Naive thymus-derived CD4-positive, alpha-beta T cell (primary cell): ENCODE measurements at regions of chr14 and their contacts with region 1.

Region 1: DNA sequence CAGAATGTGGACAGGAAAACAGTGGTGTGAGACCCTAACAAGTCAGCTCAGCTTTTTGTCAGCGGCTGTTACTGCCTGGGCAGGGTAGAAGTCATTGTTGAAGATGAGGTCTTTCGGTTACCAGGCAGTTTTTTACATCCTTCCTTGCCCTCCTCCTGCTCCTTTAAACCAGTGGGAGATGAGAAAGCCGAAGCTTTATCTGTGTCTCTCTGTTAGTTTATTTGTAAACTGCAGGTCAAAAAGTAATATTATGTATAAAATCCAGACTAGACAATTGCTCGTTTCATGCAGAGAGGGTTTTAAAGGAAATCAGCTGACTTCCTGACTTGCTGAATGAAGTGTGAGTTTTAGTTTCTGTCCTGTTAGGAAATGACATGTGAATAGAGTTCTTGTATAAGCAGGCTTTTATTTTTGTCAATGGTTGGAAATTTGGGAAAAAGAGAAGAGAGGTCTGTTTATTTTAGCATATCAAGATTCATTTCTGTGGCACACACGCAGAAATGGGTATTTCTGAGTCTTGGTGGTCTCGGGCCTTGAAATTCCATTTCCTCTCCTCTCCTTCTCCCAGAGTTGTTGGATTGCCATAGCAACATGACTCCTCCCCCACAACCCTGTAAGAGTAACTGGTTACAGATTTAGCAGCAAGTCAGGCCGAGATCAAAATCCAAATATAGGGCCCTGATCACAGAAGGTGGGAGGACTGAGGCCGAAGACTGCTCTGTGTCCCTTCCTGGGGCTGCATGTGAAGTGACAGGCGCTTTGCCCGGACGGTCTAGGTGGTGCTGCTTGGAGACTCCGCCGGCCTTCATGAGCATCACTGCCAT is 60.8 kb downstream of the SAMD4A start:
- DNase-seq: peak in 7 of 9 donors; percentile 30 to 59 (median 44)
- ATAC-seq: peak; percentile 81
- H3K4me3 ChIP-seq: peak overlapping the region; percentile 14
- H3K4me3 Mint-ChIP-seq: peak overlapping the region; percentile 70 to 87 (median 82)
- H3K27ac ChIP-seq: peak overlapping the region; percentile 67
- H3K27ac Mint-ChIP-seq: peak overlapping the region; percentile 86 to 93 (median 92)
- H3K4me1 ChIP-seq: peaks cover 32 to 39% of the 10 kb centered on the region in 2 donors
- H3K4me1 Mint-ChIP-seq: peaks cover 34 to 51% (median 42%) of the 10 kb centered on the region in 7 donors
- H3K27me3 ChIP-seq: no peaks in the 10 kb centered on the region
- H3K27me3 Mint-ChIP-seq: no peaks in the 10 kb centered on the region

Region 2: DNA sequence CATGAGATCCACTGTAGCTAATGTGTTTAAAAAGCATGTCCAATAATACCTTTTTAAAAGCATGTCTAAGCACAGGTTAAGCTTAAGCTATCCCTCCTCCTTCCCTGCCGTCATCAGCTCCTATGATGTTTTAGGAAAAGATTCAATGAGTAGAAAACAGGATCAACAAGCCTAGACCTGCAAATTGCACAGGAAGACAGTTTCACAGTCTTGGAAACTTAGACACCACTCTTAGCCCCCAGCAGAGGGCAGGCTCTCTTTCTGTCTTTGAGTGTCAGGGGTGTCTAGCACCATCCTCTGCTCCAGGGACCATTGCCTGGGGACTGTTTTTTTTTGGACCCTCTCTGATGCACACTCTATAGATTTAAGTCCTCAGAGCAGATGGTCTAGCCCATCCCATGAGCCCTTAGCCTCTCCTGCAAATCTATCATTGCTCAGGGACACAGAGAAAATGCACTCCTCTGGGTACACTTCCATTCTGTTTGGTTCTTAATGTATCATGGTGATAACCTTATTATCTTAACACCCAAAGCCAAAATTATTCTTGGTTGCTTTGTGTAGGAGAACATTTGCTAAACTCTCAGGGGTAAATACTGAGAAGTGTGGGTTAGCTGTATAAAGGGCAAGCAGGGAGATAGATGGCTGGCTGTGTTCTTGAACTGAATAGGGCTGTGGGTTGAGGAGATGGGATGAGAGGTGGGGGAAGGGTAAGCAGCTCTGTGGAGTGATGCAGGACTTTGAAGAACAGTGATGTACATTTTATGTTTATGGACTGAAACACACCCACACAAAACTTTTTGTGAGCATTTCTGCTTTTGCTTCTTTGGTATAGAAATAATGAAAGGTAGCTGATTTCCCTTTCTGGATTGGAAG is 1214.7 kb before region 1 on chr14:
- CTCF ChIA-PET with region 1: no interaction called
- POLR2A ChIA-PET with region 1: no interaction called
- intact Hi-C with region 1: no loop called
- DNase-seq: no peak
- ATAC-seq: no peak
- H3K4me3 ChIP-seq: no peak overlapping the region
- H3K4me3 Mint-ChIP-seq: no peak overlapping the region
- H3K27ac ChIP-seq: no peak overlapping the region
- H3K27ac Mint-ChIP-seq: no peak overlapping the region
- H3K4me1 ChIP-seq: no peaks in the 10 kb centered on the region
- H3K4me1 Mint-ChIP-seq: no peaks in the 10 kb centered on the region
- H3K27me3 ChIP-seq: no peaks in the 10 kb centered on the region
- H3K27me3 Mint-ChIP-seq: peaks cover 0 to 14% (median 0%) of the 10 kb centered on the region in 5 donors

Region 3: GRCh38 chr14:54555651-54556050 is 72.1 kb before region 1 on chr14:
- CTCF ChIA-PET with region 1: no interaction called
- POLR2A ChIA-PET with region 1: no interaction called
- intact Hi-C with region 1: no loop called
- DNase-seq: no peak
- ATAC-seq: no peak
- H3K4me3 ChIP-seq: no peak overlapping the region
- H3K4me3 Mint-ChIP-seq: no peak overlapping the region
- H3K27ac ChIP-seq: no peak overlapping the region
- H3K27ac Mint-ChIP-seq: no peak overlapping the region
- H3K4me1 ChIP-seq: no peaks in the 10 kb centered on the region
- H3K4me1 Mint-ChIP-seq: peaks cover 0 to 5% (median 0%) of the 10 kb centered on the region in 7 donors
- H3K27me3 ChIP-seq: no peaks in the 10 kb centered on the region
- H3K27me3 Mint-ChIP-seq: peaks cover 6 to 16% (median 11%) of the 10 kb centered on the region in 5 donors

Region 4: DNA sequence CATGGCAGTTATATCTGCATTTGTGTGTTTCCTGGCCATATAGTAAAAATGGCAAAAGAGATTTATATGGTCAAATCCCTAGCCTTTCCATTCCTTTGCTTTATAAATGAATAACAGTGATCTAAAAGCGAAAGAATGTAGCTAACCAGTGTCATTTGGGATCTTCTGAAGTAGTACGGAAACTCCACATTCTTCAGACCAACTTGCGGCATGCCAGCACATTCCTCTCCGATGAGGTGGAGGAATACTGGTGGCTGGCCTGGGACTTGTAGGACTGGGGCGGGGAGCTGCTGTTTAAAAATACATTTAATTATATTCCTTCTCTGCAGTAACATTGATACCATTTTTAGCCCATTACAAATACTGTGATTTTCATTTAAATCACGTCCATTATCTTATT is 24.4 kb after region 1 on chr14:
- CTCF ChIA-PET with region 1: no interaction called
- POLR2A ChIA-PET with region 1: no interaction called
- intact Hi-C with region 1: no loop called
- DNase-seq: no peak
- ATAC-seq: no peak
- H3K4me3 ChIP-seq: no peak overlapping the region
- H3K4me3 Mint-ChIP-seq: no peak overlapping the region
- H3K27ac ChIP-seq: no peak overlapping the region
- H3K27ac Mint-ChIP-seq: no peak overlapping the region
- H3K4me1 ChIP-seq: no peaks in the 10 kb centered on the region
- H3K4me1 Mint-ChIP-seq: peaks cover 0 to 5% (median 0%) of the 10 kb centered on the region in 7 donors
- H3K27me3 ChIP-seq: no peaks in the 10 kb centered on the region
- H3K27me3 Mint-ChIP-seq: peaks cover 27 to 46% (median 37%) of the 10 kb centered on the region in 5 donors

Region 5: GRCh38 chr14:54664971-54665370 is 37.2 kb after region 1 on chr14:
- CTCF ChIA-PET with region 1: no interaction called
- POLR2A ChIA-PET with region 1: no interaction called
- intact Hi-C with region 1: loop called in 1 of 2 experiments (anchors 5 kb)
- DNase-seq: no peak
- ATAC-seq: no peak
- H3K4me3 ChIP-seq: no peak overlapping the region
- H3K4me3 Mint-ChIP-seq: no peak overlapping the region
- H3K27ac ChIP-seq: no peak overlapping the region
- H3K27ac Mint-ChIP-seq: no peak overlapping the region
- H3K4me1 ChIP-seq: peaks cover 0 to 5% of the 10 kb centered on the region in 2 donors
- H3K4me1 Mint-ChIP-seq: peaks cover 0 to 7% (median under 1%) of the 10 kb centered on the region in 7 donors
- H3K27me3 ChIP-seq: peaks cover 0 to 4% of the 10 kb centered on the region in 2 donors
- H3K27me3 Mint-ChIP-seq: peaks cover 0 to 50% (median 8%) of the 10 kb centered on the region in 5 donors

Region 6: GRCh38 chr14:54691525-54692283 is 64.0 kb after region 1 on chr14:
- CTCF ChIA-PET with region 1: no interaction called
- POLR2A ChIA-PET with region 1: no interaction called
- intact Hi-C with region 1: loop called in 1 of 2 experiments (anchors 5 kb)
- DNase-seq: peak in 5 of 9 donors; percentile 4 to 30 (median 24)
- ATAC-seq: peak; percentile 63
- H3K4me3 ChIP-seq: no peak overlapping the region
- H3K4me3 Mint-ChIP-seq: no peak overlapping the region
- H3K27ac ChIP-seq: no peak overlapping the region
- H3K27ac Mint-ChIP-seq: no peak overlapping the region
- H3K4me1 ChIP-seq: no peaks in the 10 kb centered on the region
- H3K4me1 Mint-ChIP-seq: peaks cover 0 to 19% (median 0%) of the 10 kb centered on the region in 7 donors
- H3K27me3 ChIP-seq: no peaks in the 10 kb centered on the region
- H3K27me3 Mint-ChIP-seq: peaks cover 11 to 29% (median 20%) of the 10 kb centered on the region in 5 donors

Region 7: DNA sequence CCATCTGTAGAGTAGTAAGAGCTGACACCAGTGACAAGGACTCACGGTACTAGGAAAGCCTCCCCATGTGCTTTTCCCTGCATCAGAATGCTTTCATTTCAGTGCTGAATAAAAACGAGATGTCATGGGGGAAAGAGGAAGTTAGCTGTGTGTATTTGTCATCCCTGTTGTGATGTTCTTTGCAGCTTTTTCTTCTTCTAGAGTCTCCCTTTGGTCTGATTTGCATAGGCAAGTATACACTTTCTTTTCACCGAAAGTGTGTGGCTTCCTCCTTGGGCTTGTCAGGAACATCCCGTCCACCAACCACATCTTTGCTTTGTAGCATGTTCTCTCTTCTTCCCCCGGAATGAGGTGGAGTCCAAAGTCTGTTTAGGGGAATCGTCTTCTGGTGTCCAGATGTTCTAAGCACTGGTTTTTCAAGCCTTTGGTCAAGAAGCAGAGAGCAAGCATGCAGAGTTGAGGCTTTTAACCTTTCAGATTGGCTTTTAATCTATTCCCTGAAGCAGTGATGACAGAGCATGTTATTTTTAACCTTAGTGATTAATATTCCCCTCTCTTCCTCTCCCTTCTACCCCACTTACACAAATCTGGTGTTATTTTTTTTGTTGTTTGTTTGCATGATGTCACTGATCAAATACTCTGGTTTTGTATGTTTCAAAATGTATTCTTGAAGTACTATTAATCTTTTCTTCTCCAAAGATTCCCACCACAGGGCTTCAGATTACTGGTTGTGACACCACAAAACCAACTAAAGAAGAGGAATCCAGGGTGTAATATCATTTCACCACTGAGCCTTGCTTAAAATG is 102.6 kb after region 1 on chr14:
- CTCF ChIA-PET with region 1: no interaction called
- POLR2A ChIA-PET with region 1: no interaction called
- intact Hi-C with region 1: loop called in 1 of 2 experiments (anchors 5 kb)
- DNase-seq: peak in 3 of 9 donors; percentile 1 to 46 (median 16)
- ATAC-seq: peak; percentile 75
- H3K4me3 ChIP-seq: peak overlapping the region; percentile 1
- H3K4me3 Mint-ChIP-seq: peak overlapping the region; percentile 27 to 77 (median 70)
- H3K27ac ChIP-seq: no peak overlapping the region
- H3K27ac Mint-ChIP-seq: peak overlapping the region in 7 of 9 donors; percentile 4 to 85 (median 28)
- H3K4me1 ChIP-seq: peaks cover 0 to 6% of the 10 kb centered on the region in 2 donors
- H3K4me1 Mint-ChIP-seq: peaks cover 8 to 43% (median 19%) of the 10 kb centered on the region in 7 donors
- H3K27me3 ChIP-seq: peaks cover 0 to 3% of the 10 kb centered on the region in 2 donors
- H3K27me3 Mint-ChIP-seq: peaks cover 0 to 41% (median 9%) of the 10 kb centered on the region in 5 donors